Ascending aorta (tissue), 2 donors: ENCODE measurements at regions of chr10 and their contacts with region 1.

Region 1: DNA sequence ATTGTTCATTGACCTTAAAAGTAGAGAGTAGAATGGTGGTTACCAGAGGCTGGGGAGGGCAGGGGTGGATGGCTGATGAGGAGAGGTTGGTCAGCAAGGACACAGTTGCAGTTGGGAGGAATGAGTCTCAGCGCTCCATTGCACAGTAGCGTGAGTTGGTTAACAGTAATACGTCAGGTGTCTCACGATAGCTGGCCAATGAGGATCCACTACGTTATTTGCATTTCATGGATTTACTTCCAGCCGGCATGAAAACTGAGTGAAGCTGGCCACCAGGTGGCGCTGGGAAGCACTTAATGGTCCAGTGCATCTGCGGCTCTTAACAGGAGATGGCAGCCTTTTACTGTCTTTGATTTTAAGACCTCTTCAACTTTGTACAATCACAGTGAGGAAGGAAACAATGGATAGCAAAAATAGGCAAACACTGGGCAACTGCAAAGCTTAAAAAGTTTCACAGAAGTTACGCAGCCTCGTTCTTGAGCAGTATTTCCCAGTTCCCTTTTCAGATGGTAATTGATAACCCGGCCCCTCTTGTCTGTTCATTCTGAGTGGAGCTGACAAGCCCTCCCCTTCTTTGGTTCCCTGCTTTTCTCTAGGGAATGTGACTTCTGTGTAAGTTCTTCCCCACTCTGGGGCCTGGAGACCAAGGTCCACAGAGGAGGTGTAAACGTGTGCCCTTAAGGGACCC is 23.7 kb downstream of the AKR1E2 start:
- DNase-seq: peak; percentile 55 to 97
- H3K4me3 ChIP-seq: no peak overlapping the region
- H3K27ac ChIP-seq: peak overlapping the region; percentile 37 to 39
- H3K4me1 ChIP-seq: peaks cover 2 to 26% of the 10 kb centered on the region in 2 donors
- H3K27me3 ChIP-seq: no peaks in the 10 kb centered on the region
- CTCF ChIP-seq: peak; percentile 96 to 99 (median 99)

Region 2: GRCh38 chr10:4784667-4785333 is 64.9 kb before region 1 on chr10:
- intact Hi-C with region 1: no loop called
- DNase-seq: no peak
- H3K4me3 ChIP-seq: no peak overlapping the region
- H3K27ac ChIP-seq: no peak overlapping the region
- H3K4me1 ChIP-seq: no peaks in the 10 kb centered on the region
- H3K27me3 ChIP-seq: no peaks in the 10 kb centered on the region
- CTCF ChIP-seq: no peak

Region 3: GRCh38 chr10:4941540-4942330 is 92.0 kb after region 1 on chr10:
- intact Hi-C with region 1: loop called (anchors 2 kb)
- DNase-seq: no peak
- H3K4me3 ChIP-seq: no peak overlapping the region
- H3K27ac ChIP-seq: peak overlapping the region; percentile 91 to 94
- H3K4me1 ChIP-seq: peaks cover 16 to 37% of the 10 kb centered on the region in 2 donors
- H3K27me3 ChIP-seq: no peaks in the 10 kb centered on the region
- CTCF ChIP-seq: no peak

Region 4: DNA sequence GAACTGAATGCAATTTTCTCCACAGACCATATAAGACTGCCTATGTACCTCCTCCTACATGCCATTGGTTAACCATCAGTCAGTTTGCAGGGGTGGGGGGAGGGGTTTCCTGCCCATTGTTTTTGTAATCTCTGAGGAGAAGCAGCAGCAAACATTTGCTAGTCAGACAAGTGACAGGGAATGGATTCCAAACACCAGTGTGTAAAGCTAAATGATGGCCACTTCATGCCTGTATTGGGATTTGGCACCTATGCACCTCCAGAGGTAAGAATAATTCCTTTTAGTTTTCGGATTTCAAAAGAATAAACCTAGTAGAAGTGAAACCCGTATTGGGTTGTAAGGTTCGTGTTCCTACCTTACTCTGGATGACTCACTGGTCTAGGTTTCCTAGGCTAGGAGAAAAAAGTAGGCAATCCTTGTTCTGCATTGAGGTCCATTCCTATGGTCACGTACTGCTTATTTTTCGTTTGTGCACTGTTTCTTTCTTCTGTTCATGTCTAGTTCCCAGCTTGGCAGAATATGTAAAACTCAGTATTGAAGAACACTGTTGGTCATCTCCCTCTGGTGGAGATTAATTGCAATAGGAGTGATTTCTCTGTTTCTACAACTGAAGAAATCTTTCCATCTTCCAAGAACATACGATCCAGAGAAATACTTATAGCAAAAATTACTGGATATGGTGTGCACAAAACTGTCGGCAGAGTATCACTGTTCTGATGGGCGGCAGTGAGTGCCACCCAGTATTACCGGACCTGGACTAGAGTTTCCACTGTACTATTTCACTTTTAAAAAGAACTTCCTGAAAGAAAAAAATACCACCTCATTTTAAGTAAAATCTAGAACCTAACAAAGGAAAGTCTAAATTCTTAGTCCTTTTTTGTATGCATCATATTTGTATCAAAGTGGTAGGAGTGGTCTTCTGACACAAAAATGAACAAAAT is 244.8 kb after region 1 on chr10 and contains the start of gene AKR1C3:
- intact Hi-C with region 1: loop called (anchors 1 kb)
- DNase-seq: no peak
- H3K4me3 ChIP-seq: peak within 1 kb of the TSS; percentile 56 to 66
- H3K27ac ChIP-seq: peak within 1 kb of the TSS; percentile 63 to 65
- H3K4me1 ChIP-seq: peaks cover 0 to 8% of the 10 kb centered on the region in 2 donors
- H3K27me3 ChIP-seq: no peaks in the 10 kb centered on the region
- CTCF ChIP-seq: peak; percentile 71 to 84 (median 74)
- total RNA-seq, gene AKR1C3: 64.4 TPM

Region 5: GRCh38 chr10:5252177-5253015 is 402.7 kb after region 1 on chr10:
- intact Hi-C with region 1: no loop called
- DNase-seq: no peak
- H3K4me3 ChIP-seq: no peak overlapping the region
- H3K27ac ChIP-seq: no peak overlapping the region
- H3K4me1 ChIP-seq: no peaks in the 10 kb centered on the region
- H3K27me3 ChIP-seq: no peaks in the 10 kb centered on the region
- CTCF ChIP-seq: no peak

Region 6: DNA sequence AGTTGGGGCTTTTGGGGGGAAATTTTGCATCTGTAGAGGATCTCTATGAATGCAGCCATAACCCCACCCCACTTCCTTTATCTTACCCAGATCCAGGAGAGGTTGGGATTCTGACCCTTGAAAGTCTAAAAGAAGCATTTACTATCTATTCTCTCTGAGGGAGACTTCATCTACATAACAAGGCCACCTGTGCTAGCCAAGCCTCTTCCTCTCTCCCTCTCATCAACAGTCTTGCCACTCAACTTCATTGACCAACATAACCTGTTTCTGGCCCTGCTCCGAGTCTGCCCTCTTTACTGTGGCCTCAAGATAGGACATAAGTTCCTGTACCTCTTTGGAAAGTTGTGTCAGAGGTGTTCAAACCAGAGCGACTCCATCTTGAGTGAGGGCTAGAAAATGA is 535.5 kb after region 1 on chr10:
- intact Hi-C with region 1: loop called (anchors 2 kb)
- DNase-seq: peak in 1 of 2 donors; percentile 30
- H3K4me3 ChIP-seq: no peak overlapping the region
- H3K27ac ChIP-seq: no peak overlapping the region
- H3K4me1 ChIP-seq: no peaks in the 10 kb centered on the region
- H3K27me3 ChIP-seq: no peaks in the 10 kb centered on the region
- CTCF ChIP-seq: no peak

Region 7: GRCh38 chr10:5840314-5841307 is 990.9 kb after region 1 on chr10:
- intact Hi-C with region 1: no loop called
- DNase-seq: no peak
- H3K4me3 ChIP-seq: no peak overlapping the region
- H3K27ac ChIP-seq: no peak overlapping the region
- H3K4me1 ChIP-seq: no peaks in the 10 kb centered on the region
- H3K27me3 ChIP-seq: no peaks in the 10 kb centered on the region
- CTCF ChIP-seq: no peak